ENCODE measurements at regions of chr12 and their contacts with region 1.

Region 1: DNA sequence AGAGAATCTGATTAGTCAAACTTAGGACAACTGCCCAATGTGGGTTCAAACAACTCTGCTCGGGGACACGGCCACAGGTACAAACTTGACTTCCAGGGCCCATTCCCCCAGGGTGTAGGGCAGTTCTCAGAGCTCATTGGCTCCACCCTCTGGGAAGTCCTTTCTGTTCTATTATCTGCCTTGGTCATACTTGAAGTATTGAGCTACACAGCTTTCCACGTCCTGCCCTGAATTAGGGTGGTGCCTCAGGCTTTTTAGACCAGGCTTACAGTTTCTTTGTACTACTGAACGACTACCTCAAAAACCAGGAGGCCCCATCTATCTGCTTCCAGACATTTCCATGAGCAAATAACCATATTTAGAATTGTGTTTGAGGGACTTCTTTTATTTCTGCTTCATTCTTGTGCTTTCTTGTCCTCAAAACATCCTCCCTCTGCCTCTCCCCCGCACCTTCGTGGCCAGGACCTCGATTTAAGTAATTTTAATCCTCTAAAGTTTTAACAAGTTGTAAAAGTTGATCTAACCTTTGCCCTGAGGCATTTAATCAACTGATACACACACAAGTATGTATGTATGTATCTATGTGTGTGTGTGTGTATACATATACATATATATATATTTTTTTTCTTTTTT is 281.7 kb upstream of the AMIGO2 start:
- DNase-seq: peak; percentile 70
- ATAC-seq: peak; percentile 77
- H3K4me3 Mint-ChIP-seq: peak overlapping the region; percentile 75
- H3K27ac Mint-ChIP-seq: peak overlapping the region; percentile 98
- H3K4me1 Mint-ChIP-seq: peaks cover 60% of the 10 kb centered on the region
- H3K27me3 Mint-ChIP-seq: no peaks in the 10 kb centered on the region

Region 2: GRCh38 chr12:47014474-47014873 is 347.0 kb before region 1 on chr12:
- CTCF ChIA-PET with region 1: no interaction called
- POLR2A ChIA-PET with region 1: no interaction called
- DNase-seq: no peak
- ATAC-seq: no peak
- H3K4me3 Mint-ChIP-seq: no peak overlapping the region
- H3K27ac Mint-ChIP-seq: no peak overlapping the region
- H3K4me1 Mint-ChIP-seq: no peaks in the 10 kb centered on the region
- H3K27me3 Mint-ChIP-seq: peaks cover 18% of the 10 kb centered on the region

Region 3: DNA sequence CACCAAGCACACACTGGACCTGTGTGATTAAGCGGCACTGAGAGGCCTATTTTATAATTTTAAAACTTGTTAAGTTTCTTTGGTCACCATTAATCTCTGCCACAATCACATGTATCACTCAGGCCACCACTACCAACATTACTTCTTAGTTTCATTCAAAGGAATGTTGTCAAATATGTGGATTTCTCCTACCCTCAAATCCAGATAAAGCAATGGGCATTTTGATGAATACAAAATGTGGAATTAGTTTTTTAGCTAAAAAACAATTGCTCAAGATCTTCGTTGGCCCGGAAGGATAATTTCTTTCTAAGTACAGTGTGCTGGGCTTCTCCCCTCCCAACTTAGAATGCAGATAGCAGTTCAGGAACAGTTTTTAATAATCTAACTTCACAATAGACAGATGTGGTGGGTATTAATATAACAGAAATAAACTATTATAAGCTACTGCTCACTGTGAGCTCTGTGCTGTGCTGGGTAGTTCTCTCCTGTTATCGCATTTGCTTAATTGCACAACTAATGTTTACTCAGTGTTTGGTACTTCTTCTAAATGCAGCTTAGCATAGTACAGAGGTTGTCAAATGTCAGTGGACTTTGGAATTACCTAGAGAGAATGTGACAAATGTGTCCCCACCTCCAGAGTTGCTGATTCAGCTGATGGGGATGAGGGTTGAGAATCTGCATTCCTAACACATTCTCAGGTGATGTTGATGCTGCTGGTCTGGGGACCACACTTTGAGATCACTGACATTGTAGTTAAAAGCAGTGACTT is 15.1 kb before region 1 on chr12:
- CTCF ChIA-PET with region 1: interaction called, 10 read pairs
- POLR2A ChIA-PET with region 1: no interaction called
- DNase-seq: no peak
- ATAC-seq: no peak
- H3K4me3 Mint-ChIP-seq: no peak overlapping the region
- H3K27ac Mint-ChIP-seq: no peak overlapping the region
- H3K4me1 Mint-ChIP-seq: peaks cover 36% of the 10 kb centered on the region
- H3K27me3 Mint-ChIP-seq: no peaks in the 10 kb centered on the region

Region 4: GRCh38 chr12:47391566-47391965 is 30.1 kb after region 1 on chr12:
- CTCF ChIA-PET with region 1: interaction called, 53 read pairs
- POLR2A ChIA-PET with region 1: interaction called, 26 read pairs
- DNase-seq: peak; percentile 86
- ATAC-seq: peak; percentile 75
- H3K4me3 Mint-ChIP-seq: peak overlapping the region; percentile 56
- H3K27ac Mint-ChIP-seq: peak overlapping the region; percentile 98
- H3K4me1 Mint-ChIP-seq: peaks cover 84% of the 10 kb centered on the region
- H3K27me3 Mint-ChIP-seq: no peaks in the 10 kb centered on the region